ENCODE measurements at regions of chr9 and their contacts with region 1.

Region 1: GRCh38 chr9:21943464-21943863 is 50.7 kb downstream of the CDKN2A start:
- DNase-seq: no peak
- ATAC-seq: no peak
- H3K4me3 ChIP-seq: no peak overlapping the region
- H3K4me3 Mint-ChIP-seq: no peak overlapping the region
- H3K27ac ChIP-seq: no peak overlapping the region
- H3K27ac Mint-ChIP-seq: no peak overlapping the region
- H3K4me1 ChIP-seq: no peaks in the 10 kb centered on the region
- H3K4me1 Mint-ChIP-seq: no peaks in the 10 kb centered on the region
- H3K27me3 ChIP-seq: peaks cover 0 to 14% (median 3%) of the 10 kb centered on the region in 4 experiments
- H3K27me3 Mint-ChIP-seq: peaks cover 37% of the 10 kb centered on the region
- CTCF ChIP-seq: no peak

Region 2: DNA sequence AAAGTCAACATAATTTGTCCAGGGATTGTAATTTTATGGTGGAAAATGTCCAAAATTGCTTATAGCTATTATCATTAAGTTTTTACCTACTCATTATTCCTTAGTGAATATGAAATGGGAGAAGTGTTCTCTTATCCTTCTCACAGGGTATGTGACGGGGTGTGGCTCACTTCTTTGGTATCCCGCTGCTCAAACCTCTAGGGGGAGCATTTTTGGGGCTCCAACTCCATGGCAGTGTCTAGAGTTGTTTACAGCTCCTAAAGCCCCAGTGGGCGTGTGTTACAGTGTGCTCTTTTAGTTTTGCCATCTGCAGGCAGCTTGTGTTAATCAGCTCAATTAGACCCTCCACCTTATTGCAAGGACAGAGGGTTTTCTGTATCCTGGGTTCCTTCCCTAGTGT is 38.7 kb before region 1 on chr9:
- CTCF ChIA-PET with region 1: no interaction called
- POLR2A ChIA-PET with region 1: no interaction called
- intact Hi-C with region 1: loop called (anchors 5 kb)
- DNase-seq: no peak
- ATAC-seq: no peak
- H3K4me3 ChIP-seq: no peak overlapping the region
- H3K4me3 Mint-ChIP-seq: no peak overlapping the region
- H3K27ac ChIP-seq: no peak overlapping the region
- H3K27ac Mint-ChIP-seq: no peak overlapping the region
- H3K4me1 ChIP-seq: no peaks in the 10 kb centered on the region
- H3K4me1 Mint-ChIP-seq: peaks cover 6% of the 10 kb centered on the region
- H3K27me3 ChIP-seq: no peaks in the 10 kb centered on the region
- H3K27me3 Mint-ChIP-seq: no peaks in the 10 kb centered on the region
- CTCF ChIP-seq: no peak

Measured in B cell (primary cell).